Right ventricle myocardium superior (tissue), 1 donor: ENCODE measurements at regions of chr15 and their contacts with region 1.

Region 1: DNA sequence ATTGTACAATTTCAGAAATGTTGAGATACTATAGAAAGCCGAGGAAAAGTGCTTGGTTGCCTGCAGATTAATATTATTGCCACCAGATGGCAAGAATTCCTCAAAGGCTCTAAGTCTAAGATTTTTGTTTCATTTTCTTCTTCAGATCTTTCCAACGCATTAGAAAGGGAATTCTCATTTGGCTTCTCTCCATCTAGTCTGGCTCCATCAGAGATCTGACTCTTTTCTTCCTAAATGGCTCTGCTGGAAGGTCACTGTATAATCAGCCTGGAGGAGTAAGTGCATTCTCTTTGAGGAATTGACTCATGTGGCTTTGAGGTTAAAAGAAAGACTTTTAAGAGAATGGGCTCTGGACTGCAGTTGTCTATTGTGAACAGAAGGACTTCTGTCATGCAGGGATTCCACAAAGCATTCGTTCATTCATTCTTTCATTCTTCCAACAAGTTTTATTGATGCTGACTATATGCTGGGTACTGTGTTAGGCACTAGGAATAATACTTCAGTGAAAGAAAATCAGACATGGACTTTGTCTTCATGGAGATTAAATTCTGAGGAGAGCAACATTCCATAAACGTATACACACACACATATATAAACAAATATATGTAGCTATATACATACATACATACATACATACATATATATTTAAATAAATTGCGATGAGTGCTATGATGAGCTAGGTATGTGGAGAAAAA is 55.3 kb downstream of the SLC28A2 start:
- DNase-seq: no peak
- ATAC-seq: peak; percentile 57

Region 2: GRCh38 chr15:45402162-45402954 is 95.0 kb after region 1 on chr15:
- intact Hi-C with region 1: loop called (anchors 2 kb)
- DNase-seq: peak; percentile 97
- ATAC-seq: peak; percentile 98

Region 3: GRCh38 chr15:45448066-45448510 is 140.7 kb after region 1 on chr15:
- intact Hi-C with region 1: no loop called
- DNase-seq: no peak
- ATAC-seq: no peak